Activated T-helper 1 cell treated with anti-CD3 and anti-CD28 coated beads, Interleukin-12 subunit alpha, Interleukin-12 subunit beta, Interleukin-2, Interleukin-4 antibody, amounts not matched to agents 30 ng/mL and 10 ng/mL and 1 ng/mL, durations not matched to agents 14 hours and 24 hours and 36 hours (primary cell): ENCODE measurements at regions of chr17 and their contacts with region 1.

Region 1: DNA sequence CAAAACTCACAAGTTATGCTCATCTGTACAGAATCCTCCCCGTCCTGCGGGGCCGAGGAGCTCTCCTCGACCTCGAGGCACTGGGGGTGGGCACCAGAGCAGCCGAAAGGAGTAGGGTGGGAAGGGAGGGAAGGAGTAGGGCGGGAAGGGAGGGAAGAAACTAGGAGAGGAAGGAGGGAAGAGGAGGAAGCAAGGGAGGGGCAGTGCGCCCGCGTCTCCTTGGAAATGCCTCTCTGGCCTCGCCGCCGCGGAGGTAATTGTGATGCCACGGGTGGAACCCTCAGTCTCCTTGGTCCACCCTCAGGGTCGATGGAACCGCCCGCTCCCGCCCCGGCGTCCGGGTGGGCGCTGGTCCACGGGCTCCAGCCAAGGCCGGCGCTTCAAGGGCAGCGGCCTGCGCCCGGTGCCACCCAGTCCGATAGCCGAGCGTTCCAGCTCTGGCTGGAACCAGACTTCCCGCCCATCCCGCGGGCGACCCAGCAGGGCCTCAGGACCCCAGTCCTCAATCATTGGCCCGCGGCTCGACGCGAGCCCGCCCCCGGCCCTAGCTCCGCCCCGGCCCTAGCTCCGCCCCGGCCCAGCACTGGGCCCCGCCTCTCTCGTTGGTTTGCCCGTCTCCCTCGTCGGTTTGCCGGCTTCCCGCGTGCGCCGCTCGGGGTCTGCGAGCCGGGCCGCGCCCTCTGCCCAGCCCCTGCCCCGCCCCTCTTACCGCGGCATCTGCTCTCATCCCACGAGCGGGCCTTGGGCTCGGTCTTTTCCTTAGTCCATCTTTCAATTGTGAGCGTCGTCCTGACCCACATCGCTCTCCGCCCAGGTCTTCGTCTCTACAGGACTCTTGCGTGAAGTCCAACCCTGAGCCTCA is 596 bp downstream of the PROCA1 start:
- DNase-seq: peak; percentile 92
- H3K4me3 Mint-ChIP-seq: peak overlapping the region; percentile 89
- H3K27ac Mint-ChIP-seq: peak overlapping the region; percentile 92
- H3K4me1 Mint-ChIP-seq: peaks cover 20% of the 10 kb centered on the region
- H3K27me3 Mint-ChIP-seq: peaks cover 16% of the 10 kb centered on the region

Region 2: GRCh38 chr17:28576758-28577465 is 134.2 kb before region 1 on chr17 and contains the start of gene ALDOC:
- intact Hi-C with region 1: loop called (anchors 1 kb)
- DNase-seq: peak; percentile 98
- H3K4me3 Mint-ChIP-seq: peak within 1 kb of the TSS; percentile 86
- H3K27ac Mint-ChIP-seq: peak within 1 kb of the TSS; percentile 94
- H3K4me1 Mint-ChIP-seq: peaks cover 79% of the 10 kb centered on the region
- H3K27me3 Mint-ChIP-seq: no peaks in the 10 kb centered on the region
- total RNA-seq, gene ALDOC: 44.0 and 47.6 TPM in 2 replicates

Region 3: DNA sequence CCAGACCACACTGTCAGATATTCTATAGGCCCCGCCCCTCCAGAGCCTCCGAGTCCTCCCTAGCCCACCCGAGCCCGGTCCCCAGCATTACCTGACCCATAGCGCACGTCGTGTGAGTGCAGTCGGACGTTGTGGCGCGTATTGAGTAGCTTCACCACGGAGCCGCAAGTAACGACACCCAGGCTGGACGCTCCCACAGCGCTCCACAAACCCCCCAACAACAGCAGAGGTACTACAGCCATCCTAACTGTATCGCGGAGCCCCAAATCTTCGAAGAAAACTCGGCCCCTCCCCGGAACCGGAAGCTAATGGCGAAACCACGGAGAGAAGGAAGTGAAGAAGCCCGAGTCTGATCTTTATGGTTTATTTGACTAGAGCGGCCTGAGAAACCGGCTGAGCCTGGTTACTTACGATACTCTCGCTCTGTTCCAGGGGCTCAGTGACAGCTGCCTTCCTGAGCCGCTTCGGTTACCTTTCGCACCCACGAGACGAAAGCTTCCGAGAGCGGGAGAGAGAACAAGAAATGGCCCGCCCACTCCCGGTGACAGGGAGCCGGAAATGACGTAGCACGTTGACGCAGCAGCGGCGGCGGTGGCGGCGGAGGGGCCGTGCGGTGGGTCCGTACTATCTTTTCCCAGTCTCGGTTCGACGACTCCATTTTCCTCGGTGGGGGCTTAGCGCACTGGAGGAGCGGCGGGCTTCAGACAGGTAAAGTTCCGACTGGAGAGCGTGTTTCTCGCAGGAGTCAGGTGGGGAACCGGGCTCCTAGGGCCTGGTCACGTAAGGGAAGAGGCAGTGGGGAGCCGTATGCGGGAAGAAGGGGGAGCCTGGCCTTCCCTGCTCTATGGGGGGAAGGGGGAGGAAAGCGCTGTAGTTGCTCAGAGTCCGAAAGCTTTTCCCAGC is 49.2 kb before region 1 on chr17 and contains the starts of genes SDF2 and SUPT6H:
- intact Hi-C with region 1: loop called (anchors 1 kb)
- DNase-seq: peak; percentile 90
- H3K4me3 Mint-ChIP-seq: peak within 1 kb of the TSS; percentile 100
- H3K27ac Mint-ChIP-seq: peak within 1 kb of the TSS; percentile 99
- H3K4me1 Mint-ChIP-seq: peaks cover 53% of the 10 kb centered on the region
- H3K27me3 Mint-ChIP-seq: no peaks in the 10 kb centered on the region
- total RNA-seq, gene SDF2: 47.9 and 51.0 TPM in 2 replicates
- total RNA-seq, gene SUPT6H: 106 and 108 TPM in 2 replicates

Region 4: GRCh38 chr17:29389982-29390850 is 679.1 kb after region 1 on chr17 and contains the start of gene TAOK1:
- intact Hi-C with region 1: loop called (anchors 10 kb)
- DNase-seq: peak; percentile 97
- H3K4me3 Mint-ChIP-seq: peak within 1 kb of the TSS; percentile 98
- H3K27ac Mint-ChIP-seq: peak within 1 kb of the TSS; percentile 95
- H3K4me1 Mint-ChIP-seq: peaks cover 43% of the 10 kb centered on the region
- H3K27me3 Mint-ChIP-seq: no peaks in the 10 kb centered on the region
- total RNA-seq, gene TAOK1: 45.9 and 46.9 TPM in 2 replicates